ENCODE measurements at regions of chr1 and their contacts with region 1.

Region 1: DNA sequence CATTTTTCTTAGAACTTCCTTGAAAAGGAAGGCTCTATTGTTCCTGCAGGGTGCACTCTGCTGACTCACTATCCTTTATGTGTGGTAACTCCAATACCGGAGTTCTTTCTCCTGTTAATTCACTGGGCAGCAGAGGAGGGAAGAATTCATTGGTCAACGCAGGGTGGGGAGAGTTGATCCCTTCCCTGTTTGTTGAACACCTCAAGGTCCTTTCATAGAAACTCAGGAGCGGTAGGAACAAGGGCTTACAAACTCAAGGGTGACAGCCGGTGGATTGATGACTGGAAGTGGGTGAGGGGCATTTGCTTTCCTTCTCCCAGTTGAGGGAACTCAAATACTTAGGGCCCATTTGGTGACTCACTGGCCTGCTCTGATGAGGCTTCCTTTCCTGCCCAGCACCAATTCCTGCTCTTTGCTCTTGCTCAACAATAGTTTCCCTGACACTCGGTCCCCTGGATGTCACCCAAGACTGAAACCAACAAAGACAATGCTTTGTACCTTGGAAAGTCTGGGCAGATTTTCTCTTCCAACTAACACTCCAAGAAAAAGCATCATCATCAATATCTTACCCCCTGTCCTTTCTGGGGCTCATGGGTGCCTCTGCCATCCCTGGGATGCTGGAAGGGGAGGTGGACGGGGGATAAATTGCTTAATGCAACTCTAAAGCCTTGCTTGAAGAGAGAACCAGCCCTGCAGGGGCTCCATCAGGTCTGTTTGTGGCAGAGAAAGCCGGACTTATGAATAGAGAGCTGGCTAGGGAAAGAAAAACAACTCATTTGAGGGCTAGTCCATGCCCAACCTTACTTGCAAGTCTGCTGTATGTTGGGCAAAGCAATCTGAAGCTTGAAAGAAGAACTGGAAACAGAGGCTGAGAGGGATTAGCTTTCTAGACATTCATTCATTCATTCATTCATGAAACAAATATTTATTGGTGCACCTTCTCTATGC is 9.3 kb downstream of the SLC26A9 start:
- DNase-seq: no peak
- ATAC-seq: peak in 1 of 8 donors; percentile 57
- H3K4me3 ChIP-seq: no peak overlapping the region
- H3K27ac ChIP-seq: peak overlapping the region in 2 of 10 donors; percentile 32 to 64
- H3K4me1 ChIP-seq: peaks cover 0 to 32% (median 2%) of the 10 kb centered on the region in 9 donors
- H3K27me3 ChIP-seq: peaks cover 0 to 8% (median 0%) of the 10 kb centered on the region in 7 donors
- CTCF ChIP-seq: no peak

Region 2: DNA sequence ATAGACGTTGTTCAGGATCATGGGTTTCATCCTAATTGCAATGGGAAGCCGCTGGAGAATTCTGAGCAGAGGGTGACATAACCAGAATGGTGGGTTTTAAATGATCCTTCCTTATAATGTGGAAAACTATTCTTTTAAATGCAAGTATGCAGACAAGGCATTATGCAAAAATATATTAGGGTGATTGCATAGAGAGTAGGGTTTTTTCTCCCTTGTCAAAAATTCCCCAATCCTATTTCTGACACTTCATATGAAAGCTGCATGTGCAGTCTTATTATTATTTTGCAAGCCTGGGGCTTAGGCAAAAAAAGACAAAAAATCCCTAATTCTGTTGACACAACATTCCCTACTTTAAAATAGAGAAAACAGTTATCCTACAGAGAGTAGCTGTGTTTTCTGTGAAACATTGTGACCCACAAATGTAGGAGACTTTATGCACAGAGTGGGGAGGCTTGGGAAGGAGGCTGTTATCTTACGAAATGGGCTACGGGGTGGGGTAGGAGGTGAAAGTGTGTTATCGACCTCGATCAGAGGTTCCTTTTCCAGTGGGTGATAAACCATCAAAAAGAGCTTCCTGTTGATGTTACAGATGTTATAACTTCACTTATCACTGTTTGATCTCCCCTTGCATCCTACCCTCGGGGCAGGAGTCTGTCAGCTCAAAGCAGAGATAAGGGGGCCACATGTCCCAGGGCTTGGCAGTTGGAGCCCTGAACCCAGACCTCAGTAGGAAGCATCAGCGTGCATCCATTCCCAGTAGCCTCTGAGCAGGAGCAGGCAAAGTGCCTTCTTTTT is 146.3 kb after region 1 on chr1:
- intact Hi-C with region 1: no loop called
- DNase-seq: no peak
- ATAC-seq: no peak
- H3K4me3 ChIP-seq: no peak overlapping the region
- H3K27ac ChIP-seq: no peak overlapping the region
- H3K4me1 ChIP-seq: peaks cover 0 to 8% (median 0%) of the 10 kb centered on the region in 9 donors
- H3K27me3 ChIP-seq: peaks cover 0 to 6% (median 0%) of the 10 kb centered on the region in 7 donors
- CTCF ChIP-seq: no peak

Region 3: DNA sequence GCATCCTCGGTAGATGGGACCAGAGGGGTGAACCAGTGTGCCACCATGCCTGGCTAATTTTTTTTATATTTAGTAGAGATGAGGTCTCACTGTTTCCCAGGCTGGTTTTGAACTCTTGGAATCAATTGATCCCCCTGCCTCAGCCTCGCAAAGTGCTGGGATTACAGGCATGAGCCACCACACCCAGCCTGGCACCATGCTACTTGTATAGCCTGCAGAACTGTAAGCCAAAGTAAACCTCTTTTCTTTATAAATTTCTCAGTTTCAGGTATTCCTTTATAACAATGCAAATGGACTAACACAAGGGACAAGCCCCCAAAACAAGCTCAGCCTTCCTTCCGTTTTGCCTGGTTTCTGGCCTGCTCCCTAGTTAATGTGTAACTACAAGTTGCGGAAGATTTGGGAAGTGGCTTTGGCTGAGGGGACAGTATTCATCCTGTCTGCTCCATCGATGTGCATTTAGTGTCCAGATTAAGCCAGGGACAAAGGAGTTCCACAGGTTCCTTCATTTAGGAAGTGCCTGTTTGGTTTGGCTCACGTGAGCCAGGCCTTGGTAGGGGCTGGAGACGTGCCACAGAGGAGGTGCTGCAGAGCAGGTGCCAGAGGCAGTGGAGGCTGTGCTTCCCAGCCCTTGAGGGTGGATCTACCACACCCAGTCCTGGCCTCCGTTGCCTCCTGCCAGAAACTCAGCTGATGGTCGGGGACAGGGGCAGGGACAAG is 178.8 kb after region 1 on chr1:
- intact Hi-C with region 1: loop called in 2 of 10 experiments (anchors 5 to 10 kb)
- DNase-seq: no peak
- ATAC-seq: no peak
- H3K4me3 ChIP-seq: no peak overlapping the region
- H3K27ac ChIP-seq: no peak overlapping the region
- H3K4me1 ChIP-seq: peaks cover 0 to 17% (median 9%) of the 10 kb centered on the region in 9 donors
- H3K27me3 ChIP-seq: peaks cover 0 to 21% (median 0%) of the 10 kb centered on the region in 7 donors
- CTCF ChIP-seq: no peak